ENCODE measurements at regions of chr1 and their contacts with region 1.

Region 1: GRCh38 chr1:156096640-156097391 is 14.6 kb upstream of the MEX3A start:
- DNase-seq: peak; percentile 97
- H3K4me3 Mint-ChIP-seq: peak overlapping the region; percentile 27
- H3K27ac Mint-ChIP-seq: peak overlapping the region; percentile 98
- H3K4me1 Mint-ChIP-seq: peaks cover 61% of the 10 kb centered on the region
- H3K27me3 Mint-ChIP-seq: no peaks in the 10 kb centered on the region
- CTCF ChIP-seq: peak; percentile 93

Region 2: DNA sequence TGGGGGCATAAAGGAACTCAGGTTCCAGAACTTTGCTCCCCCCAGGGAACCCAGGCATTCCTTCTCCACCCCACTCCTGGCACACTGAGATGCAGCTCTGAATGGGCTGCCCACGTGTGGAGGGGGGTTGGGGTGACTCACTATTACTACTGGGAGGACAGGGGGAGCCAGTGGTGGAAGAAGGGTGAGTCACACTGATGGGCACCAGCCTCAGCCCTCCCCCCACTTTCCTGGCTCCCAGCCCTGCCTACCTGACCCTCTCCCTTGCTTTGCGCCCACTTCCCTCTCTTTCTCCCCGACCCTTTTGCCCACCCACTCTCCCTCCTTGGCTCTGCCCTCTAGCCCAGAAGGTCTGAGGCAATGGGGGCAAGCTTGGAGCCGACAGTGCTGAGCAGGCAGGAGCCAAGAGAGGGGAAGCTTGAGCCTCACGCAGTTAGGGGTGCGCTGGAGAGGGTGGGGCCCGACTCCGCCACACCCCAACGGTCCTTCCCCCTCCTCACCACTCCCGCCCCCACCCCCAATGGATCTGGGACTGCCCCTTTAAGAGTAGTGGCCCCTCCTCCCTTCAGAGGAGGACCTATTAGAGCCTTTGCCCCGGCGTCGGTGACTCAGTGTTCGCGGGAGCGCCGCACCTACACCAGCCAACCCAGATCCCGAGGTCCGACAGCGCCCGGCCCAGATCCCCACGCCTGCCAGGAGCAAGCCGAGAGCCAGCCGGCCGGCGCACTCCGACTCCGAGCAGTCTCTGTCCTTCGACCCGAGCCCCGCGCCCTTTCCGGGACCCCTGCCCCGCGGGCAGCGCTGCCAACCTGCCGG is 17.5 kb after region 1 on chr1 and contains the start of gene LMNA:
- CTCF ChIA-PET with region 1: interaction called, 21 read pairs
- intact Hi-C with region 1: no loop called
- DNase-seq: peak; percentile 96
- H3K4me3 Mint-ChIP-seq: peak within 1 kb of the TSS; percentile 82
- H3K27ac Mint-ChIP-seq: peak within 1 kb of the TSS; percentile 85
- H3K4me1 Mint-ChIP-seq: peaks cover 52% of the 10 kb centered on the region
- H3K27me3 Mint-ChIP-seq: no peaks in the 10 kb centered on the region
- CTCF ChIP-seq: no peak
- total RNA-seq, gene LMNA: 499 and 514 TPM in 2 replicates

Region 3: DNA sequence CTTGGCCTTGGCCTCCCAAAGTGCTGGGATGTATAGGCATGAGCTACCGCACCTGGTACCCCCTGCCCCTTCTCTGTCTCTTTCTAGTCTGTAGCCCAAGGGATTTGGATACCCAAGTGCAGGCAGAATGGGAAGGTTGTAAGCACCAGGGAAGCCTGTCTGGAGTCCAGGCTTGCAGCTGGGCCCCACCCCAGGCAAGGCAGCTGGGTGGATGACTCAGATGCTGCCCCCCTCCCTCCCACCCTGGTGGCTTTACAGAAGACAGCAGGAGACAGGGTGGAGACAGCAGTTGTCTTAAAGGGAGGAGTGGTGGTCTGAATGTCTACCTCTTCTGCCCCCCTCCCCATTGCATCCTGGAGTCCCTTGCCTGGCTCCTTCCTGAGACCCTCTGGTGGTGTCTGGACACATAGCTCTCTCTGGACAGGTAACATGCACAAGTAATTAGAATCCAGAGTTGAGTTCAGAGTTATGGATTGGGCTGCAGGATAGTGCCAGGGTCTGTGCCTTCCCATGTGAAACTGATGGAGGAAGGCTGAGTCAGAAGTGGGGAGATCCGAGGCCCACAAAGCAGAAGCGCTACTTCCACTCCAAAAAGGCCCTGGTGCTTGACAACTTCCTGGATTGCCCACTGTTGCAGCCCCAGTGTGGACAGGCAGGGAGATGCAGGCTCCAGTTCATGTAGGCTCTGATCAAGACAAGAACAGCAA is 22.8 kb after region 1 on chr1:
- CTCF ChIA-PET with region 1: interaction called, 356 read pairs
- intact Hi-C with region 1: no loop called
- DNase-seq: peak; percentile 56
- H3K4me3 Mint-ChIP-seq: peak overlapping the region; percentile 82
- H3K27ac Mint-ChIP-seq: peak overlapping the region; percentile 60
- H3K4me1 Mint-ChIP-seq: peaks cover 72% of the 10 kb centered on the region
- H3K27me3 Mint-ChIP-seq: no peaks in the 10 kb centered on the region
- CTCF ChIP-seq: no peak

Measured in Calu3 (cell line).